CD8-positive, alpha-beta T cell (primary cell): ENCODE measurements at regions of chr22 and their contacts with region 1.

Region 1: GRCh38 chr22:40679964-40680818 is 907 bp downstream of the MCHR1 start:
- DNase-seq: no peak
- ATAC-seq: no peak
- H3K4me3 ChIP-seq: no peak overlapping the region
- H3K4me3 Mint-ChIP-seq: no peak overlapping the region
- H3K27ac ChIP-seq: no peak overlapping the region
- H3K27ac Mint-ChIP-seq: no peak overlapping the region
- H3K4me1 ChIP-seq: peaks cover 11% of the 10 kb centered on the region
- H3K4me1 Mint-ChIP-seq: peaks cover 17% of the 10 kb centered on the region
- H3K27me3 ChIP-seq: no peaks in the 10 kb centered on the region
- H3K27me3 Mint-ChIP-seq: peaks cover 10% of the 10 kb centered on the region
- CTCF ChIP-seq: no peak

Region 2: DNA sequence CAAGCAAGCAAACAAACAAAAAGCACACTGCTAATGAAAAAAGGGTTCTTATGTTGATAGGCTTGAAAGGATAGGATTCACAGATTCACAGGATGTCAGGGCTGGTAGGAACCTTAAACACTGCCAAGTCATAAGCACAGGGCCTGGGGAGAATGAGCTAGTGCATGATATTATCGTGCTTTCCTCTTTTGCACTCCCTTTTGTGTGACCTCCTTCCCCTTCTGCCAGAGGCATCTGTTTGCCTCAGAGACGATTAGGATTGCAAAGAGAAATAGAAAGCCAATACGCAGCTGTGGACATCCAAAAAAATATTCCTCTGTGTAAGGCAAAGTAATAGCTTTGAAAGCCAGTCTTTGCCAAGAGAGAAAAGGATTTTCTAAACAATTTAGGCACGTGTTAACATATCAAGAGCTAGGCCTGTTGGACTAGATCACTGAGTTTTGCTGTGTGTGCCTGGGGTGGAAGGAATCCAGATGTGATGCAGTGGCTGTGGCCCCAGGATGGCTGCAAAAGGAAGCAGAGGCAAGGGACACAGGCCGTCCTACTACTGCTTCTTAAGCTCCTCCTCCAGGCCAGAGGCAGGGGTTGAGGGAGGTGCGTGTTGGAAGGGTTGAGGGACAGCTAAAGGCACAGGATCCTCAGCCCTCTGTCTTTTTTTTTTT is 29.7 kb after region 1 on chr22:
- CTCF ChIA-PET with region 1: interaction called, 14 read pairs
- POLR2A ChIA-PET with region 1: interaction called, 3 read pairs
- intact Hi-C with region 1: no loop called
- DNase-seq: no peak
- ATAC-seq: no peak
- H3K4me3 ChIP-seq: no peak overlapping the region
- H3K4me3 Mint-ChIP-seq: no peak overlapping the region
- H3K27ac ChIP-seq: no peak overlapping the region
- H3K27ac Mint-ChIP-seq: no peak overlapping the region
- H3K4me1 ChIP-seq: peaks cover 11% of the 10 kb centered on the region
- H3K4me1 Mint-ChIP-seq: peaks cover 9% of the 10 kb centered on the region
- H3K27me3 ChIP-seq: no peaks in the 10 kb centered on the region
- H3K27me3 Mint-ChIP-seq: no peaks in the 10 kb centered on the region
- CTCF ChIP-seq: no peak

Region 3: DNA sequence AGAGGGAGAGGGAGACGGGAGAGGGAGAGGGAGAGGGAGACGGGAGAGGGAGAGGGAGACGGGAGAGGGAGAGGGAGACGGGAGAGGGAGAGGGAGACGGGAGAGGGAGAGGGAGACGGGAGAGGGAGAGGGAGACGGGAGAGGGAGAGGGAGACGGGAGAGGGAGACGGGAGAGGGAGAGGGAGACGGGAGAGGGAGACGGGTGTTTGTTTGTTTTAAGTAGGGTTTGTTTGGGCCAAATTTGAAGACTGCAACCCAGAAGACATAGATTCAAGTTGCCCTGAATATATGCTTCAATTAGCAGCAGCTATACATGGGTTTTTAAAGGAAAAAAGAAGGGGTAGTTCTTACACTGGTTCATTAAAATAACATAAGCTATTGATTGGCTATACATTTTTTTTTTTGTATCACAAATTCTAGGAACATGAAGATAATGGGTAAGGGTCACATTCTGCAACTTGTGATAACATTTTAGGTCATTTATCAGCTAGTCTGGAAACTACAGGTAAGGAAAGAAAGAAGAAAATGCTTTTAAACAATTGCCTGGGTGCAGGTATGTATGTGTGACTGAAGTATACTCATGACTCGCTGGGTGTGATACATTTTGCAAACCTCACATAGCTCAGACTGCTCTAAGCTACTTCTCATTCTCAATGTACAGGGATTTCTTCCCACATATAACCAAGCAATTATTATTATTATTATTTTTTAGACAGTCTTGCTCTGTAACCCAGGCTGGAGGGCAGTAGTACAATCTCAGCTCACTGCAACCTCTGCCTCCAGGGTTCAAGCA is 66.4 kb after region 1 on chr22:
- CTCF ChIA-PET with region 1: interaction called, 55 read pairs
- POLR2A ChIA-PET with region 1: interaction called, 4 read pairs
- intact Hi-C with region 1: no loop called
- DNase-seq: no peak
- ATAC-seq: no peak
- H3K4me3 ChIP-seq: no peak overlapping the region
- H3K4me3 Mint-ChIP-seq: no peak overlapping the region
- H3K27ac ChIP-seq: no peak overlapping the region
- H3K27ac Mint-ChIP-seq: no peak overlapping the region
- H3K4me1 ChIP-seq: no peaks in the 10 kb centered on the region
- H3K4me1 Mint-ChIP-seq: no peaks in the 10 kb centered on the region
- H3K27me3 ChIP-seq: no peaks in the 10 kb centered on the region
- H3K27me3 Mint-ChIP-seq: no peaks in the 10 kb centered on the region
- CTCF ChIP-seq: no peak

Region 4: DNA sequence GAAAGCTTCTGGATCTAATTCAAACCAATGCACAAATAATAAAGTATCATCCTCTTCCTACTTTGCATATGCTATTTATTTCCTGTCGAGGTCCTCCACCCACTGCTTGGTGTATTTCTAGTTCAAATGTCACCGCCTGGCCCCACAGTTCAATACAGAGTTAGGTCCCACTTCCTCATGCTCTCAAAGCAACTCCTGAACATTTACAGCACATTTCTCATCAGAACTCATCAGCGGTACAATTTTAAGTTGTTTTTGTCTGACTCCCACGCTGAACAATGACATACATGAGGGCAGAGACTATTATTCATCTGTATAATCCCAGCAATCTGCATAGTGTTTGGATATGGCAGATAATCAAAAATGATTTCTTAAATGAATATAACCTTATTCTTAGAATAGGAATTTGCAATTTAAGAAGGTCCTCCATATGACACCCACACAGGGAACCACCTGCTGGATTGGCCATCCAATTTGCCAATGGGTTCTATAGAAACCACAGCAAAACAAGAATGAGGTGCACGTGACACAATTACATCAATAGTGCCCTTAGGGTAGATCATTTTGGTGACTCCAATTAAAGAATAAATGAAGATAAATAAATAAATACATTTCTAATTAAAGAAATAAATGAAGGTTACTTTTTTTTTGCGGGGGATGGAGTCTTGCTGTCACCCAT is 84.7 kb after region 1 on chr22:
- CTCF ChIA-PET with region 1: interaction called, 159 read pairs
- POLR2A ChIA-PET with region 1: interaction called, 7 read pairs
- intact Hi-C with region 1: loop called in 1 of 2 experiments (anchors 1 kb)
- DNase-seq: peak in 6 of 9 experiments; percentile 7 to 52 (median 20)
- ATAC-seq: peak; percentile 67
- H3K4me3 ChIP-seq: no peak overlapping the region
- H3K4me3 Mint-ChIP-seq: peak overlapping the region; percentile 17
- H3K27ac ChIP-seq: peak overlapping the region; percentile 21 to 53
- H3K27ac Mint-ChIP-seq: peak overlapping the region; percentile 89
- H3K4me1 ChIP-seq: peaks cover 12% of the 10 kb centered on the region
- H3K4me1 Mint-ChIP-seq: peaks cover 16% of the 10 kb centered on the region
- H3K27me3 ChIP-seq: no peaks in the 10 kb centered on the region
- H3K27me3 Mint-ChIP-seq: no peaks in the 10 kb centered on the region
- CTCF ChIP-seq: no peak

Region 5: DNA sequence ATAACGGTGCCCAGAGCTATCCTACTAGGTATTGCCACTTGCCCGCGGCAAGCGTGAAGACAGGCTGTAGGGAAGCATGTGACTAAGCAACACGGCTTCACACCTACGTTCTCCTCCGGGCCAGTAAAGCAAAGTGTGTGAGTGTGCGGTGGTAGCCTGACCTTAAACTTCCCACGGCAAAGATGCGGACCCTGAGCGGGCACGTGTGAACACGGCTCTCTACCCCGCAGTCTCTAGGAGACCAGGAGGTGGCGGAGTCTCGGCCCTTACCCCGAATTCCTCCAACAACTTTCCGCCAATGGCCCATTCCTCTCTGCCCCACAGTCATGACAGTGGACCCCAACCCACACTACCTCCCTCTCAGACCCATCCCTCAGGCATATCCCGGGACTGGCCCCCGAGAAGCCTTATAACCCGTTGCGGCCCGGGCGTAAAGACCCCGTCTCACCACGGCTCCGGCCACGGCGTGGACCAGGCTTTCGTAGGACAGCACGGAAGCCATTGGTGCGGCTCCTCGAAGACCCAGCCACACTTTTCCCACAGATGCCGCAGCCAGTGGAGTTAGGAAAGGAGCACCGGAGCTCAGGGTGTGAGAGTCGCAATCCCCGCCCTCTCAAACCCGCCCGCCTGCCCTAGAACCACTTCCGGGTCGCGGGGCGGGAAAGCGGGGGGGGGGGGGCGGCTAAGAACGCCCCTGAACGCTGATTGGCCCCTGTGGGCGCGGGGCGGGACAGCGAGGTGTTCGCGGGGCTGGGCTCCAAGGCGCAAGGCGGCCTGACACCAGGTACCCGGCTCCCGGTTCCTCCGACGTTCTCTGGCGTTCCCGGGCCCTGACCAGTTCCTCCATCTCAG is 138.8 kb after region 1 on chr22 and contains the start of gene SLC25A17:
- CTCF ChIA-PET with region 1: interaction called, 5 read pairs
- POLR2A ChIA-PET with region 1: interaction called, 3 read pairs
- intact Hi-C with region 1: loop called in 1 of 2 experiments (anchors 1 kb)
- DNase-seq: peak; percentile 72 to 93 (median 88)
- ATAC-seq: peak; percentile 88
- H3K4me3 ChIP-seq: peak within 1 kb of the TSS; percentile 87 to 91
- H3K4me3 Mint-ChIP-seq: peak within 1 kb of the TSS; percentile 96
- H3K27ac ChIP-seq: peak within 1 kb of the TSS; percentile 69 to 81
- H3K27ac Mint-ChIP-seq: peak within 1 kb of the TSS; percentile 88
- H3K4me1 ChIP-seq: peaks cover 18% of the 10 kb centered on the region
- H3K4me1 Mint-ChIP-seq: peaks cover 41% of the 10 kb centered on the region
- H3K27me3 ChIP-seq: no peaks in the 10 kb centered on the region
- H3K27me3 Mint-ChIP-seq: no peaks in the 10 kb centered on the region
- CTCF ChIP-seq: no peak
- total RNA-seq, gene SLC25A17: 3.2 to 4.0 TPM

Region 6: GRCh38 chr22:41022470-41023298 is 342.5 kb after region 1 on chr22:
- CTCF ChIA-PET with region 1: no interaction called
- POLR2A ChIA-PET with region 1: no interaction called
- intact Hi-C with region 1: loop called in 1 of 2 experiments (anchors 5 kb)
- DNase-seq: peak; percentile 46 to 89 (median 80)
- ATAC-seq: peak; percentile 77
- H3K4me3 ChIP-seq: peak overlapping the region; percentile 60 to 77
- H3K4me3 Mint-ChIP-seq: peak overlapping the region; percentile 81
- H3K27ac ChIP-seq: peak overlapping the region; percentile 74 to 84
- H3K27ac Mint-ChIP-seq: peak overlapping the region; percentile 84
- H3K4me1 ChIP-seq: peaks cover 12% of the 10 kb centered on the region
- H3K4me1 Mint-ChIP-seq: peaks cover 14% of the 10 kb centered on the region
- H3K27me3 ChIP-seq: peaks cover 0 to 4% of the 10 kb centered on the region in 2 experiments
- H3K27me3 Mint-ChIP-seq: no peaks in the 10 kb centered on the region
- CTCF ChIP-seq: no peak